ENCODE measurements at regions of chr11 and their contacts with region 1.

Region 1: GRCh38 chr11:22875869-22876473 is 15.7 kb upstream of the CCDC179 start:
- DNase-seq: peak; percentile 90
- H3K4me3 Mint-ChIP-seq: no peak overlapping the region
- H3K27ac Mint-ChIP-seq: no peak overlapping the region
- H3K4me1 Mint-ChIP-seq: no peaks in the 10 kb centered on the region
- H3K27me3 Mint-ChIP-seq: peaks cover 45% of the 10 kb centered on the region
- CTCF ChIP-seq: peak; percentile 65

Region 2: DNA sequence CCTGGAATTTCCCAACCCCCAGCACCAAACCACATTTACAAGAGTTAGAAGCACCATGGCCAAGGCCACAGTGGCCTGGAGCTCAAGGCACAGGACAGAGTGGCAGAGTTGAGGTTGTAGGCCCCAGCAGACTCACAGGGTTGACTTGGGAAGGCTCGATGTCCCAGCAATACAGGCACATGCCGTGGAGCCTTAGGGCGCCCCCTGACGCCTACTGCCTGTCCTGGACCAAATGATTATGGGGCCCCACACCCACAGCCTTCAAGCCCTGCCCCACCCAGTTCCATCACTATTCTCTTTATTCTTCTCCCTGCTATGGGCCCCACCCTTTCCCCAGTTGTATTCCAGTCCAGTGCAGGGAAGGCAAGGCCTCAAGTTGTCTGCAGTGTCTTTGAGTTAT is 15.7 kb before region 1 on chr11 and contains the start of gene CCDC179:
- CTCF ChIA-PET with region 1: interaction called, 11 read pairs
- POLR2A ChIA-PET with region 1: no interaction called
- intact Hi-C with region 1: no loop called
- DNase-seq: no peak
- H3K4me3 Mint-ChIP-seq: no peak within 1 kb of the TSS
- H3K27ac Mint-ChIP-seq: no peak within 1 kb of the TSS
- H3K4me1 Mint-ChIP-seq: no peaks in the 10 kb centered on the region
- H3K27me3 Mint-ChIP-seq: peaks cover 14% of the 10 kb centered on the region
- CTCF ChIP-seq: no peak
- total RNA-seq, gene CCDC179: not detected in 2 replicates

Region 3: GRCh38 chr11:23555085-23555484 is 679.1 kb after region 1 on chr11:
- CTCF ChIA-PET with region 1: no interaction called
- POLR2A ChIA-PET with region 1: no interaction called
- intact Hi-C with region 1: loop called (anchors 5 kb)
- DNase-seq: no peak
- H3K4me3 Mint-ChIP-seq: no peak overlapping the region
- H3K27ac Mint-ChIP-seq: no peak overlapping the region
- H3K4me1 Mint-ChIP-seq: no peaks in the 10 kb centered on the region
- H3K27me3 Mint-ChIP-seq: peaks cover 29% of the 10 kb centered on the region
- CTCF ChIP-seq: no peak

Measured in MCF 10A (cell line).